ENCODE measurements at regions of chr16 and their contacts with region 1.

Region 1: DNA sequence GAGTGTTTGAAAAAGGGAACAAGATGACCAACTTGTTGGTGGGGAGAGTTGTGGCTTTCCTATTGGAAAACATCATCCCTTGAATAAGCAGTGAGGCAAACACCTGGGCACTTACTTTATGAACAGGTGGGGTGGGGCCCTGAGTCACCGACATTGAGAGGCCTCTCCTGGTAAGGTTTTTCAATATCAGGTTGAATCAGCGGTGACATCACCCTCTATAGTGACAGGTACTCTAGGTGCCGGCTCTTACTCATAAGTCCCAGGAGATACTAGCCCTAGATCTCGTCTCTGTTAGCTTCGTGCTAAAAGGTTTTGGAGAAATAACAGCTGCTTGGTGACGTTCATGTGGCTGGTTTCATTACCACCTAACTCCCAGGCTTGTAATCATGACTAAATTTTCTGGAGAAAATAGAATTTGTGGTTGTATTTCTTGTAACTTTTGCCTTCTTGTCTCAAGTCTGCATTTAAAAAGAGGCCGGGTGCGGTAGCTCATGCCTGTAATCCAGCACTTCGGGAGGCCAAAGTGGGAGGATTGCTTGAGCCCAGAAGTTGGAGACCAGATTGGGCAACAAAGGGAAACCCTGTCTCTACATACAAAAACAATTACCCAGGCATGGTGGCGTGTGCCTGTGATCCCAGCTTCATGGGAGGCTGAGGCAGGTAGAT is 19.3 kb downstream of the CDH1 start:
- DNase-seq: peak; percentile 90
- ATAC-seq: peak; percentile 69
- H3K4me3 Mint-ChIP-seq: peak overlapping the region; percentile 52
- H3K27ac Mint-ChIP-seq: peak overlapping the region; percentile 97
- H3K4me1 Mint-ChIP-seq: peaks cover 66% of the 10 kb centered on the region
- H3K27me3 Mint-ChIP-seq: no peaks in the 10 kb centered on the region

Region 2: GRCh38 chr16:68264128-68265077 is 492.0 kb before region 1 on chr16 and contains the start of gene SLC7A6:
- CTCF ChIA-PET with region 1: no interaction called
- POLR2A ChIA-PET with region 1: no interaction called
- intact Hi-C with region 1: loop called in 1 of 2 experiments (anchors 10 kb)
- DNase-seq: peak; percentile 92
- ATAC-seq: peak; percentile 69
- H3K4me3 Mint-ChIP-seq: peak within 1 kb of the TSS; percentile 91
- H3K27ac Mint-ChIP-seq: peak within 1 kb of the TSS; percentile 97
- H3K4me1 Mint-ChIP-seq: peaks cover 43% of the 10 kb centered on the region
- H3K27me3 Mint-ChIP-seq: no peaks in the 10 kb centered on the region
- total RNA-seq, gene SLC7A6: 55.7 to 58.7 TPM

Region 3: GRCh38 chr16:68644715-68645493 is 111.5 kb before region 1 on chr16 and contains the start of gene CDH3:
- CTCF ChIA-PET with region 1: no interaction called
- POLR2A ChIA-PET with region 1: no interaction called
- intact Hi-C with region 1: loop called in 1 of 2 experiments (anchors 1 kb)
- DNase-seq: peak; percentile 52
- ATAC-seq: peak; percentile 27
- H3K4me3 Mint-ChIP-seq: peak within 1 kb of the TSS; percentile 61
- H3K27ac Mint-ChIP-seq: no peak within 1 kb of the TSS
- H3K4me1 Mint-ChIP-seq: peaks cover 12% of the 10 kb centered on the region
- H3K27me3 Mint-ChIP-seq: peaks cover 52% of the 10 kb centered on the region
- total RNA-seq, gene CDH3: 7.3 to 9.1 TPM

Region 4: DNA sequence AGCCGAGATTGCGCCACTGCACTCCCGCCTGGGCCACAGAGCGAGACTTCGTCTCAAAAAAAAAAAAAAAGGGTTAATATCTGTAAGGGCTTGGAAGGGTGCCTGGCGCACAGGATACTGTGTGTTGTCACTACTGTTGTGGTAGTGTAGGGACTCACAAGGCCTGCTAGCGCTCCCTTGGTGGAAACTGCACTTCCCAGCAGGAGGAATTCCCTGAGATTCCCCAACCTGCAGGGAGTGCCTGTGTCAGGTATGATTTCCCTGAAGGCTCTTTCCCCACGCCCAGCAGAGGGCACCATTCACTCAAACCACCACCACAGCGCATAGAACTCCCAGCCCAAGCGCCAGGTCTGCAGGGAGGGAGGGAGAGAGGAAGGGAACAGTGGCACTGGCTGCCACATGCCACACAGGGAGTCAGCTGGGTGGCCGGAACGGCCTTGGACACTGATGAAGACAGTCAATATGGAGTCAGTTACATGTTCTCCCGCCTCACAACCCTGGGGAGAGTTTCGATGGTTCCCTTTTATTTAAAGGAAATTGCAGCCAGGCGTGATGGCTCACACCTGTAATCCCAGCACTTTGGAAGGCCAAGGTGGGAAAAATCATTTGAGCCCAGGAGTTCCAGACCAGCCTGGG is 52.0 kb before region 1 on chr16:
- CTCF ChIA-PET with region 1: no interaction called
- POLR2A ChIA-PET with region 1: no interaction called
- intact Hi-C with region 1: loop called in 1 of 2 experiments (anchors 10 kb)
- DNase-seq: peak; percentile 83
- ATAC-seq: peak; percentile 91
- H3K4me3 Mint-ChIP-seq: no peak overlapping the region
- H3K27ac Mint-ChIP-seq: peak overlapping the region; percentile 39
- H3K4me1 Mint-ChIP-seq: peaks cover 5% of the 10 kb centered on the region
- H3K27me3 Mint-ChIP-seq: peaks cover 3% of the 10 kb centered on the region

Region 5: GRCh38 chr16:68800257-68800875 is 44.0 kb after region 1 on chr16:
- CTCF ChIA-PET with region 1: interaction called, 14 read pairs
- POLR2A ChIA-PET with region 1: no interaction called
- intact Hi-C with region 1: loop called in 1 of 2 experiments (anchors 5 kb)
- DNase-seq: peak; percentile 82
- ATAC-seq: peak; percentile 98
- H3K4me3 Mint-ChIP-seq: no peak overlapping the region
- H3K27ac Mint-ChIP-seq: no peak overlapping the region
- H3K4me1 Mint-ChIP-seq: peaks cover 11% of the 10 kb centered on the region
- H3K27me3 Mint-ChIP-seq: no peaks in the 10 kb centered on the region

Region 6: GRCh38 chr16:69535123-69536050 is 779.0 kb after region 1 on chr16:
- CTCF ChIA-PET with region 1: no interaction called
- POLR2A ChIA-PET with region 1: no interaction called
- intact Hi-C with region 1: loop called in 1 of 2 experiments (anchors 1 kb)
- DNase-seq: no peak
- ATAC-seq: no peak
- H3K4me3 Mint-ChIP-seq: no peak overlapping the region
- H3K27ac Mint-ChIP-seq: no peak overlapping the region
- H3K4me1 Mint-ChIP-seq: peaks cover 21% of the 10 kb centered on the region
- H3K27me3 Mint-ChIP-seq: peaks cover 1% of the 10 kb centered on the region